Activated B cell treated with CpG ODN at 0.5 μM for 24 hours (primary cell): ENCODE measurements at regions of chr2 and their contacts with region 1.

Region 1: DNA sequence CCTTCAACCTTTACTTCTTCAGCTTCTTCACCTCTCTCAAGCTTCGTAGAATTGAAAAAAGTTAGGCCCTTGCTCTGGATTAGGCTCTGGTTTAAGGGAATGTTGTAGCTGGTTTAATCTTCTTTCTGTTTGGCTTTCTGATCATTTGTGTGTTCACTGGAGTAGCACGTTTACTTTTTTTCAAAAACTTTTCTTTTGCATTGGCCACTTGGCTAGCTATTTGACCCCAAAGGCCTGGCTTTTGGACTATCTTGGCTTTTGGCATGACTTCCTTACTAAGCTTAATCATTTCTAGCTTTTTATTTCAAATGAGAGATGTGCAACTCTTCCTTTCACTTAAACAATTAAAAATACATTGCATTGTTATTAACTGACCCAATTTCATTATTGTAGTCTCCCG is 1154.8 kb upstream of the ZEB2 start:
- DNase-seq: no peak
- ATAC-seq: no peak
- H3K4me3 Mint-ChIP-seq: no peak overlapping the region
- H3K27ac Mint-ChIP-seq: no peak overlapping the region
- H3K4me1 Mint-ChIP-seq: peaks cover 24% of the 10 kb centered on the region
- H3K27me3 Mint-ChIP-seq: no peaks in the 10 kb centered on the region
- CTCF ChIP-seq: no peak

Region 2: DNA sequence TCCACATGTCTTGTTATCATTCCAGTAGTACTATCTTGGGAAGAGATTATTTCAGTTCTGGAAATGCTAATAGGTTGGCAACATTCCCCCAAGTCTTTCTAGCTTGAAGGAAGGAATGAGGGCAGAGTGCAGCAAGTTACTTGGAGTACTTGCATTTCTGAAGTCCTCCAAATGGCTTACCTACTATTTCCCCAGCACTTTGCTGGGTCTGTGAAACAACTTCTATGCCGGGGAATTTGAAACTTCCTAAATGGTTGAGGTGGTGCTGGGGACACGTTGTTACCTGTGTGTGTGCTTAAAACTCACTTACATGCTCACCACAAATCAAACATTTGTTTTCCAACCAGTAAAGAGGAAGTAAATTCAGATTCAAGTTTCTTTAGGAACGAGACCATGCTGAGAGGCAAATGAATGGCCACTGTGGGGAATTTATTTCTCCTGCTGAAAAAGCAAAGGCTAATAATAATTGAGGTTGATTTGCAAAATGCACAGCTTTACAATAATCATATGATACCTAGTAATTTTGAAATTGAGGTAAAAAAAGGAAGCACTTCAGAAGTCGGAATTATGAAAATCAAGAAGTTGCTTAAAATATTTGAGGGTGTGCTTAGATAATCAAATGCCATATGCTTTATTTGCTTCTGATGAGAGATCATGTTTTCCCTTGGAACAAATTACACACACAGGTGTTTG is 12.9 kb after region 1 on chr2:
- CTCF ChIA-PET with region 1: no interaction called
- POLR2A ChIA-PET with region 1: no interaction called
- intact Hi-C with region 1: loop called (anchors 1 kb)
- DNase-seq: no peak
- ATAC-seq: peak; percentile 56
- H3K4me3 Mint-ChIP-seq: peak overlapping the region; percentile 46
- H3K27ac Mint-ChIP-seq: peak overlapping the region; percentile 85
- H3K4me1 Mint-ChIP-seq: peaks cover 46% of the 10 kb centered on the region
- H3K27me3 Mint-ChIP-seq: no peaks in the 10 kb centered on the region
- CTCF ChIP-seq: no peak